Naive thymus-derived CD4-positive, alpha-beta T cell (primary cell): ENCODE measurements at regions of chr15 and their contacts with region 1.

Region 1: DNA sequence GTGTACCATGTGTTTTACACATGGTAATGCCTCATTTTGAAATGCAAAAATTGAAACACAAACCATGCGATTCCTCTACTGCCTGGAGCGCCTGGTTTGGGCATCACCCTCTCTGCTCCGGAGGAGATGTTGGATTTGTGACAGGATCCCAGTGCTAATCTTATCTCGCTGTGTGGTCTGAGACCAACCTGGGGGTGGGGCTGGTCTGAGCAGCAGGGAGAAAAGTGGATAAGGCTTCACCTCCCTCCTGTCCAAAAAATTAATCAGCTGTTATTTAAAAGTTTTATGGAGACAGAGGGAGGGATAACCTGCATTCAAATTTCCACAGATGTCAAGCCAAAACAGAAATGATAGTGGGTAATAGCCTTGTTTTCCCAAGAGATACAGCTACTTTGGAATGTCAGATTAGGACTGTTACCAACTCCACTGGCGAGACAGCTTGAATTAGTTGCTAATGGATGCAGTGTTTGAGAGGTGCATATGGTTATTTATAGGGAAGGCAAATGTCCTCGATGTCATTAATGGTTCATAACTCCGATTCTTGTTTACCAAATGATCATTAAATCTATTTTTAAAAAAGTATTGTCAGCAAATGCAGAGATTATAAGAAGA is 54.0 kb upstream of the SKOR1 start:
- DNase-seq: no peak
- ATAC-seq: no peak
- H3K4me3 ChIP-seq: no peak overlapping the region
- H3K4me3 Mint-ChIP-seq: no peak overlapping the region
- H3K27ac ChIP-seq: no peak overlapping the region
- H3K27ac Mint-ChIP-seq: no peak overlapping the region
- H3K4me1 ChIP-seq: no peaks in the 10 kb centered on the region
- H3K4me1 Mint-ChIP-seq: peaks cover 0 to 21% (median 10%) of the 10 kb centered on the region in 7 donors
- H3K27me3 ChIP-seq: no peaks in the 10 kb centered on the region
- H3K27me3 Mint-ChIP-seq: no peaks in the 10 kb centered on the region

Region 2: GRCh38 chr15:67715170-67715569 is 56.1 kb before region 1 on chr15:
- CTCF ChIA-PET with region 1: no interaction called
- POLR2A ChIA-PET with region 1: no interaction called
- intact Hi-C with region 1: no loop called
- DNase-seq: no peak
- ATAC-seq: no peak
- H3K4me3 ChIP-seq: no peak overlapping the region
- H3K4me3 Mint-ChIP-seq: no peak overlapping the region
- H3K27ac ChIP-seq: no peak overlapping the region
- H3K27ac Mint-ChIP-seq: no peak overlapping the region
- H3K4me1 ChIP-seq: no peaks in the 10 kb centered on the region
- H3K4me1 Mint-ChIP-seq: peaks cover 0 to 13% (median 6%) of the 10 kb centered on the region in 7 donors
- H3K27me3 ChIP-seq: no peaks in the 10 kb centered on the region
- H3K27me3 Mint-ChIP-seq: no peaks in the 10 kb centered on the region

Region 3: DNA sequence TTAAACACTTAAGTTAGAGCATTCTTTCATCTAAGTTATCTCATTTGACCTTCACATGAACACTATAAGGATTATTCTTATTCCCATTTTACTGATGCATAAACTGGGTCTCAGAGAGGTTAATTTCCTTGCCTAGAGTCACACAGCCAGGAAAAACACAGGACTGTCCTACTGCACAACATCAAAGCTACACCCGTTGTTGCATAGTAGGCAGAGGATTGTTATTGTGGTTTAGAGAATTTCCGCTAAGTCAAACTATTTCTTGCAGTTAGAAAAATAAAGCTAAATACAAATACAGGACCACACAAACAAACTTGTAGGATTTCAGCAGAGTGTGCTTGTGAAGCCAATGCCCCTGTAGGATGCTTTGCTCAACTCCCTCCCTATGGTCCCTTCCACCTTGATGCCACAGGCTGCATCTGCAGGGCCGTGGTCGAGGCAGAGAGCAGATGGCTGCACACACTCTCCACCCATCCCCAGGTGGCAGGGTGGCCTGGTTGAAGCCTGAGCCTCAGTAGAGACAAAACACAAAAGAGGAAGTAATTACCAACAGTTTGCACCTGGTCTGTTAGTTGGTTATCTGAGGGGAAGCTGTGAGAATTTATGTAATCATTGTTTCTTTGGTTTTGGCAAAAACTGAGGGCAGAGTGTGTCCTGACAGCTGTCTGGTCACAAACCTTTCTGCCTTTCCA is 12.9 kb after region 1 on chr15:
- CTCF ChIA-PET with region 1: no interaction called
- POLR2A ChIA-PET with region 1: no interaction called
- intact Hi-C with region 1: loop called in 1 of 2 experiments (anchors 2 kb)
- DNase-seq: peak in 3 of 9 donors; percentile 3 to 9 (median 8)
- ATAC-seq: peak; percentile 57
- H3K4me3 ChIP-seq: no peak overlapping the region
- H3K4me3 Mint-ChIP-seq: peak overlapping the region; percentile 9 to 70 (median 32)
- H3K27ac ChIP-seq: no peak overlapping the region
- H3K27ac Mint-ChIP-seq: peak overlapping the region; percentile 7 to 86 (median 51)
- H3K4me1 ChIP-seq: peaks cover 5 to 20% of the 10 kb centered on the region in 2 donors
- H3K4me1 Mint-ChIP-seq: peaks cover 15 to 39% (median 35%) of the 10 kb centered on the region in 7 donors
- H3K27me3 ChIP-seq: no peaks in the 10 kb centered on the region
- H3K27me3 Mint-ChIP-seq: no peaks in the 10 kb centered on the region

Region 4: GRCh38 chr15:68106656-68107055 is 335.4 kb after region 1 on chr15:
- CTCF ChIA-PET with region 1: no interaction called
- POLR2A ChIA-PET with region 1: no interaction called
- intact Hi-C with region 1: no loop called
- DNase-seq: no peak
- ATAC-seq: no peak
- H3K4me3 ChIP-seq: no peak overlapping the region
- H3K4me3 Mint-ChIP-seq: peak overlapping the region in 2 of 10 donors; percentile 17 to 36
- H3K27ac ChIP-seq: no peak overlapping the region
- H3K27ac Mint-ChIP-seq: peak overlapping the region in 3 of 9 donors; percentile 18 to 76 (median 48)
- H3K4me1 ChIP-seq: peaks cover 0 to 8% of the 10 kb centered on the region in 2 donors
- H3K4me1 Mint-ChIP-seq: peaks cover 18 to 88% (median 72%) of the 10 kb centered on the region in 7 donors
- H3K27me3 ChIP-seq: no peaks in the 10 kb centered on the region
- H3K27me3 Mint-ChIP-seq: no peaks in the 10 kb centered on the region